ENCODE measurements at regions of chr1 and their contacts with region 1.

Region 1: DNA sequence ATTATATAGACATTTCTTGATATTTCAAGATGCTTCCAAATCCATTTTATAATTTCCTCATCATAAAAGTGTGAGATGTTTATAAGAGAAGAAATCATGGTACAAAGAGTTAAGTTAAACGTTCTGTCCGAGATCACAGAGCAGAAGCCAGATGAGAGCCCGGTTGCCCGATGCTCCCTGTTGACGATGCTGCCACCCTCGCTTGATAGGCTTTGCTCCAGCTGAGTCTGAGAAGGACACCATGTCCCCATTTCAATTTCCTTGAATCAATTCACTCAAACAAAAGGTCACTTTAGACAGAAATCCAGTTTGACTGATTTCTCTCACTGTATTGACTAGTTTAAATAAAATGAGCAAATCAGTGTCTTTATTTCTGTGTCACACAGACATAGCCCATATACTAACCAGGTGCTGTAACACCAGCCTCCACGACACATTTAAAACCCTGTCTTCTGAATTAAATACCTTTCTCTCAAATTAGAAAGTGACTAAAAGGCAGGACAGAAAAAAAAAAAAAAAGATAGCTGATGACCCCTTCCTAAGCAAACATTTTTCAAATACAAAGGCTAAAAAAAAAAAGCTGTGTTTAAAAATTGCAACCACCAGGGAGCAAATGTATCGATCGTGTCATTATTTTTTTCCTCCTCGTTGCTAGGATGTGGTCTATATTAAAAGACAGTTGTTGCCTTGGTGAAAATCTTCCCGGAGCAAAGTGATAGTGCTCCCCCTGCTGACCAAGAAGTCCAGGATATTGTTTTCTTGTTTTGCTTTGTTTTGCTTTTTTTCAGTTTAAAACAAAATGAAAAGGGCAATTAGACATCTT is 35.2 kb downstream of the DNASE2B start:
- DNase-seq: peak; percentile 27 to 46
- H3K4me3 ChIP-seq: peak overlapping the region in 1 of 2 donors; percentile 17
- H3K27ac ChIP-seq: peak overlapping the region in 1 of 2 donors; percentile 10
- H3K4me1 ChIP-seq: no peaks in the 10 kb centered on the region
- H3K27me3 ChIP-seq: no peaks in the 10 kb centered on the region
- CTCF ChIP-seq: peak; percentile 64 to 88 (median 76)
- POLR2A ChIP-seq: no peak

Region 2: DNA sequence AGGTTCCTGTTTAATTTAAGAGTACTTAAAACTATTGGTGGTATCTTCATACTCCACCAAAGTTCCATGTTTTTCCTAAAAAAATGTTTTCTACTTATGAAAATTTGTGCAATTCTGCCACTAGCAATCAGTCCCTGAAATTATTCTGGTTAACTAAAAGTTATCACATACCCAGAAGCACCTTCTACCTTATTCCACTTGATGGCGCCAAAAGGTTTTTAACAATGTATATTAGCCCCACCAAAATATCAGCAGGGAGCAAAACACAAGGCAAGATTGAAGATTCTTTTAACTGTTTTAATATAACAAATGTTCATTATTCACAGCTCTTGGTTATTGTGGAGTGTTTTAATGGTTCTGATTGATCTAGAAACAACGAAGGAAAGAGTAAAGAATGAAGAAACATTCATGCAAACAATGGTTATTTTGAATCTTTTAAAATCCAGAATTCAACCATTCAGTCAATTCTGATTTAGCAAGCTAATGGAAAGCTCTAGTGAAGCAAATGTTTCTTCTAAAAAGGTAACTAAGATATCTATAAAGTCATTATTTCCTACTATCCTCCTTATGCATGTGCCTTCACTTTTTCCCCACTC is 501.7 kb before region 1 on chr1:
- intact Hi-C with region 1: loop called (anchors 10 kb)
- DNase-seq: peak in 1 of 2 donors; percentile 22
- H3K4me3 ChIP-seq: no peak overlapping the region
- H3K27ac ChIP-seq: no peak overlapping the region
- H3K4me1 ChIP-seq: no peaks in the 10 kb centered on the region
- H3K27me3 ChIP-seq: no peaks in the 10 kb centered on the region
- CTCF ChIP-seq: peak; percentile 59 to 66 (median 62)
- POLR2A ChIP-seq: no peak

Region 3: GRCh38 chr1:84143796-84144565 is 289.5 kb before region 1 on chr1 and contains the start of gene PRKACB:
- intact Hi-C with region 1: loop called (anchors 10 kb)
- DNase-seq: no peak
- H3K4me3 ChIP-seq: no peak within 1 kb of the TSS
- H3K27ac ChIP-seq: peak within 1 kb of the TSS in 1 of 2 donors; percentile 25
- H3K4me1 ChIP-seq: no peaks in the 10 kb centered on the region
- H3K27me3 ChIP-seq: no peaks in the 10 kb centered on the region
- CTCF ChIP-seq: no peak
- POLR2A ChIP-seq: no peak
- total RNA-seq, gene PRKACB: 13.3 to 75.1 (median 34.2) TPM